ENCODE measurements at regions of chr9 and their contacts with region 1.

Region 1: GRCh38 chr9:68507130-68507805 is 33.4 kb downstream of the TMEM252 start:
- DNase-seq: peak; percentile 44 to 68 (median 64)
- H3K4me3 ChIP-seq: no peak overlapping the region
- H3K27ac ChIP-seq: no peak overlapping the region
- H3K4me1 ChIP-seq: peaks cover 0 to 20% (median 3%) of the 10 kb centered on the region in 4 experiments
- H3K27me3 ChIP-seq: no peaks in the 10 kb centered on the region

Region 2: DNA sequence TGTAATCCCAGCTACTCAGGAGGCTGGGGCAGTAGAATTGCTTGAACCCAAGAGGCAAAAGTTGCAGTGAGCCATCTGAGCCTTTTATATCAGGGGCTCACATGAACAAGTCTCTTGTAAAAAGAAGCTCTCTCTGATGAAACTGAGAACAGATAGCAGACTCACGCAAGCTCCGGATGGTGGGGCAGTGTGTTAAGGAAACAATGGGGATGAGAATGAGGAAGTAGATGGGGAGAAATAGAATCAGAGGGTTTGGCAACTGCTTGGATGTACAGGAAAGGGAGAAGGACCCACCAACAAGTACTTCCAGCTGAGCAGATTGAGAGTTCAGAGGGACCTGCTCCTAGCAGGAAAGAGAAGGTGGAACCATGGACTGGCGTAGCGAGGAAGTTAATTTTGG is 14.9 kb after region 1 on chr9:
- CTCF ChIA-PET with region 1: interaction called, 18 read pairs
- POLR2A ChIA-PET with region 1: no interaction called
- DNase-seq: peak; percentile 48 to 80 (median 76)
- H3K4me3 ChIP-seq: no peak overlapping the region
- H3K27ac ChIP-seq: no peak overlapping the region
- H3K4me1 ChIP-seq: peaks cover 0 to 8% (median 3%) of the 10 kb centered on the region in 4 experiments
- H3K27me3 ChIP-seq: no peaks in the 10 kb centered on the region

Region 3: DNA sequence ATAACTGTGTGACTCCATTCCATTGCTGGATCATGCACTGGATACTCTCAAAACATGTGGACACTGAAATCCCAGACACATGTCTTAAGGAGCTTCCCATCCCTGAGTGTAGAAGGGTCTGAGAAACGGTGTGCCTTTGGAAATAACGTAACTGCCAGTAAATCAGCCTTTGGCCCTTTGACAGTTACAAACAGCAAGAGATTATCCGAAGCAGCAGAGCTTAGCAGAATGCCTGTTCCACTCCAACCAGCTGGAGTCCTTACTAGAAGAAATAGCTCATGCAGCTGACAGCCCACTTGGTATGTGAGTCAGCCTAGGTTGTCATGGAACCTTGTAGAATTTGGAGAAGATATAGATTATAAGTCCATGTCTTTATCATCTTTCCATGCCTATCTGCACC is 26.4 kb after region 1 on chr9:
- CTCF ChIA-PET with region 1: no interaction called
- POLR2A ChIA-PET with region 1: no interaction called
- DNase-seq: no peak
- H3K4me3 ChIP-seq: no peak overlapping the region
- H3K27ac ChIP-seq: no peak overlapping the region
- H3K4me1 ChIP-seq: no peaks in the 10 kb centered on the region
- H3K27me3 ChIP-seq: no peaks in the 10 kb centered on the region

Region 4: DNA sequence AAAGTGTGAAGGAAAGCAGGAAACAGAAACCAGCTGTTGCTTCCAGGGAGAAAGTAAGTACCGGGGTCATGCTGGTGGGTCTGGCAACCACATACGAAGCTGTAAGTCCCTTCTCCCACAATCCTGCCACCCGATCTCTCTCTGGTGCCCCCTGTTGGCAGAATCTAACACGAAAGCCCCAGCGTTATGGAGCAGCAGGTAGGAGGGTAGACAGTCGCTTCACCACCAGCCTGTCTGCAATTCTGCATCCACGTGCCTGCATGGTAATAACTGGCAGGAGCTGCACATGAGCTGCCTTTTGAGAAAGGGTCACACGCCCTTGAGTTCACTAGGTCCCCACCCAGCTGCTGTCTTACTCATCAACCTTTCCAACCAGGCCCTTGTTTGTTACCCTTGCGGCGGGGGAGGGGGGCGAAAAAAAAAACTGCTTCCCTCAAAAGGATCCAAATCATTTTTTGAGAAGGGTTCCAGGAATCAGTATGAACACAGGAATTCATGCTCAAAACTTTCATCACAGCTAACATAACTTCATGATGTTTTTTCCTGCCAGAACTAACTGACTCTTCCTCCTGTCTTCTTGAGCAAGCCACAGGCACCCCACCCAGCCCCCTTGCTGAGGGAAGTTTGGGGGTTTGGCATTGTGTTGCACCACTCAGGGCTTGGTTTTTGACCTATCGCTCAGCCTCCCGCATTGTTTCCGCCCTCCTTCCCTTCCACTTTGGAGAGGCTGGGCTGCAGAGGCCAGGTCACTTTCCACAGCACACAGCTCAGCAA is 53.0 kb after region 1 on chr9:
- CTCF ChIA-PET with region 1: interaction called, 19 read pairs
- POLR2A ChIA-PET with region 1: no interaction called
- DNase-seq: peak; percentile 80 to 93 (median 91)
- H3K4me3 ChIP-seq: peak overlapping the region in 4 of 7 experiments; percentile 17 to 66 (median 29)
- H3K27ac ChIP-seq: peak overlapping the region in 1 of 2 experiments; percentile 28
- H3K4me1 ChIP-seq: peaks cover 14 to 79% (median 39%) of the 10 kb centered on the region in 4 experiments
- H3K27me3 ChIP-seq: no peaks in the 10 kb centered on the region

Region 5: DNA sequence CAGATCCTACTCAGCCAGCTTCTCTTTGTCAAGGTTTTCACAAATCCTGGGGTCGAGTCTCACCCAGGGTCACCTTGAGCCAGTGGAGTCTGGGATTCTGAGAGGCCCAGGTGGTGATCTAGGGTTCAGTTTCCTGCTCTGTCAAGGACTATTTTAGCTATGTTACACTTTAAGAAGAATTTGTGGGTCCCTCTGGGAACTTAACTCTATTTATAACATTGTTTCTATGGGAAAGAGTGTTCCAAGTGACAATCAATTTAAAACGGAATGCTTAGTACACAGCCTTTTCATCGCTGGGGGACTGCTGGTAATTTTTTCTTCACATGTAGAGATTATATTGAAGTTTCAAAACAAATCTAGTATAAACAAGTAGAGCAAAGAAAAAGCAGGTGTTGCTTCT is 60.3 kb after region 1 on chr9:
- CTCF ChIA-PET with region 1: interaction called, 13 read pairs
- POLR2A ChIA-PET with region 1: no interaction called
- DNase-seq: no peak
- H3K4me3 ChIP-seq: no peak overlapping the region
- H3K27ac ChIP-seq: no peak overlapping the region
- H3K4me1 ChIP-seq: peaks cover 0 to 19% (median under 1%) of the 10 kb centered on the region in 4 experiments
- H3K27me3 ChIP-seq: no peaks in the 10 kb centered on the region

Region 6: DNA sequence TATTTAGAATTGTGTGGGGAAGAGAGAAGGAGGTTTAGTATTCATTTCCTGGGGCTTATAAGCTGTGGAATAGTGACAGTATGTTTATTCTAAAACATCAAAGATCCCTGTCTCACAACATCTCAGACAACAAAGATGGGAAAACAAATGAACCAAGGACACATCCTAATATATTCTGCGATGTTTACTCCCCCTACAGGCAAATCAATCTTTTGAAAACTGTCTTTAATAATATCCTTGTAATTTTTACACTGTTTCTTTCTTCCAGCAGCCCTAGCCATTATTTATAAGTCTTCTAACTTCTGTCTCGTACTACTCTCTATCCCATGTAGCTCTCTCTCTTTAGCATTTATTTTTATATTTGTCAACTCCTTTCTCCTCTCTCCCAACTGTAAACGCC is 66.9 kb after region 1 on chr9:
- CTCF ChIA-PET with region 1: interaction called, 13 read pairs
- POLR2A ChIA-PET with region 1: no interaction called
- DNase-seq: no peak
- H3K4me3 ChIP-seq: no peak overlapping the region
- H3K27ac ChIP-seq: no peak overlapping the region
- H3K4me1 ChIP-seq: peaks cover 0 to 4% (median 2%) of the 10 kb centered on the region in 4 experiments
- H3K27me3 ChIP-seq: no peaks in the 10 kb centered on the region

Region 7: DNA sequence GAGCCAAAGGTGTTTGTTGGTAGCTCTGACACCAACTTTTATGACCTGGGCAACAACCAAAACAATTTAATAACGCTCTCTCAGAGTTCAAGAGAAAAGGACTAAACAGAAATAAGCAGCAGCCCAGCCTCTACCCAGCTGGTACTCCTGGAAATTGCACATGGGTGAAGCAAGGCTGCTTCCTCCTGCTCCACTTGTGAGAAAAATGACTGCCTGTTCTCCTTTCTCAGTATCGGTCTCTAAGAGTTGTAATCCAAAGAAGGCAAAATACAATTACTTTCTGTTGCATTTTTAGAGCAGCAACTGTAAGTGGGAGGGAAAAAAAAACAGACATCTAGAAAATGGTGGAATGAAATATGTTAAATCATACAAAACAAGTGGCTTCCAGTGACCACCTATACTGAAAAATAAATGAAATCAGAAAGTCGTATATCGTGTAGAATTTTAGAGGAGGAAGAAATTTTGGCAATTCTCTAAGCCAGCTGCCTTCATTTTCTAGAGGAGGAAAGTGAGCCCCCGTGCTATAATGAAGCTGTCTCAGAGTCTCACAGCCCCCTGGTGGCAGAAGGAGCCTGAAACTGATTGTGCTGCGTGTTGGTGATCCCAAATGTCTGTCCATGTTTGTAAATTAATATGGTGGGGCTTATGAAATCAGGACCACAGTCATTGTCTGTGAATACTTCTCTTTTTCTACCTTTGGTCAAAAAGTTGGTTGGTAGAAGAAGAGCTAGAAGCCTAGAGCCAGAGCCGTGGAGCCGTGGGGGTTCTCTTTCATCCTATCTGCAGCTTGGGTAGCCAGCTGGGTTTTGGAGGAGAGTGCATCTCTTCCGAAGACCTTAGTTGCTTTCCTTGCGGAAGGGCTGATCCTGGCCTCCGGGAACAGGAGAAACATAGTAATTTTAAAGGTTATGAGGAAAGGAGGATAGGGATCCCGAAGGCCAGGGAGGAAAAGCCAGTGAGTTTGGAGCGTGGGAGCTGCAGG is 337.7 kb after region 1 on chr9:
- CTCF ChIA-PET with region 1: no interaction called
- POLR2A ChIA-PET with region 1: no interaction called
- DNase-seq: peak; percentile 67 to 79 (median 74)
- H3K4me3 ChIP-seq: peak overlapping the region in 4 of 7 experiments; percentile 12 to 54 (median 34)
- H3K27ac ChIP-seq: no peak overlapping the region
- H3K4me1 ChIP-seq: peaks cover 4 to 18% (median 13%) of the 10 kb centered on the region in 4 experiments
- H3K27me3 ChIP-seq: no peaks in the 10 kb centered on the region